Activated CD4-positive, alpha-beta T cell treated with anti-CD3 and anti-CD28 coated beads, Interleukin-2, amount 10 ng/mL, durations not matched to agents 24 days and 14 days (primary cell): ENCODE measurements at regions of chr16 and their contacts with region 1.

Region 1: GRCh38 chr16:11263737-11264136 is 5.4 kb downstream of the TNP2 start:
- DNase-seq: peak; percentile 85
- H3K4me3 Mint-ChIP-seq: peak overlapping the region; percentile 43
- H3K27ac Mint-ChIP-seq: peak overlapping the region; percentile 91
- H3K4me1 Mint-ChIP-seq: peaks cover 40% of the 10 kb centered on the region
- H3K27me3 Mint-ChIP-seq: peaks cover 3% of the 10 kb centered on the region

Region 2: GRCh38 chr16:11297492-11298142 is 33.9 kb after region 1 on chr16:
- intact Hi-C with region 1: loop called (anchors 5 kb)
- DNase-seq: peak; percentile 92
- H3K4me3 Mint-ChIP-seq: peak overlapping the region; percentile 63
- H3K27ac Mint-ChIP-seq: peak overlapping the region; percentile 66
- H3K4me1 Mint-ChIP-seq: peaks cover 35% of the 10 kb centered on the region
- H3K27me3 Mint-ChIP-seq: peaks cover 2% of the 10 kb centered on the region

Region 3: GRCh38 chr16:11310997-11311561 is 47.3 kb after region 1 on chr16:
- intact Hi-C with region 1: loop called (anchors 2 kb)
- DNase-seq: peak; percentile 91
- H3K4me3 Mint-ChIP-seq: peak overlapping the region; percentile 58
- H3K27ac Mint-ChIP-seq: peak overlapping the region; percentile 85
- H3K4me1 Mint-ChIP-seq: peaks cover 57% of the 10 kb centered on the region
- H3K27me3 Mint-ChIP-seq: no peaks in the 10 kb centered on the region

Region 4: DNA sequence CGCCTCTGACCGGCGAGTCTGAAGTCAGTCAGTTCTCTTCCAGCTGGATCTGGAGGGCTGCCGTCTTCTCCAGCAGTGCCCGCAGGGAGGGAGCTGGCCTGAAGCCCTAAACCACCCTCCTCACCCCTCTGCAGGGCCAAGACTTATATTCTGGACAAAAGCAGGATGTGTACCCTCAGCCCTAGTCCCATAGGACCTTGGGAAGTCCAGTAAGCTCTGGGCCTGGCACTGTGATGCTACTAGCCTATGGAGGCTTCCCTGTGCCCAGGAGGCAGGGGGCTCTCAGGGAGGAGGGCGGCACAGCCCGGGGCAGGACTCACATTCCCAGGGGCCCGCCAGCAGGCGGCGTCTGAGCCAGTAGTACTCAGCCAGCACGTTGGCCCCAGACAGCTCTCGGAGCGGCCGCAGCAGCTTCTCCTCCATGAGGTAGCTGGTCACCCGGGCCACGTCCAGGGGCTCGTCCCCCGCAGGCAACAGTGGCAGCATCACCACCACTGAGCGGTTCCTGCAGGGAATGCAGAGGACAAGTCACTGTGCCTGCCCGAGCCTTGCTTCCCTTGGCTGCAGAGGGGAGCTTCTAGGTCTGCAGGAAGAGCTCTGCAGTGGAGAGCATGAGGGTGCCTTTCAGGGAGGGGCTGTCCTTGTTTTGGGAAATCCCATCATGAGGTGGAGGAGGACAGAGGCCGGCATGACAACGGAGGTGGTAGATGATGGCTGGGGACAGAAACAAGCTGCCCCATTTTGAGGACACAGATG is 123.2 kb after region 1 on chr16:
- intact Hi-C with region 1: no loop called
- DNase-seq: no peak
- H3K4me3 Mint-ChIP-seq: no peak overlapping the region
- H3K27ac Mint-ChIP-seq: no peak overlapping the region
- H3K4me1 Mint-ChIP-seq: peaks cover 11% of the 10 kb centered on the region
- H3K27me3 Mint-ChIP-seq: no peaks in the 10 kb centered on the region

Region 5: GRCh38 chr16:11669380-11670146 is 405.8 kb after region 1 on chr16:
- intact Hi-C with region 1: no loop called
- DNase-seq: peak; percentile 62
- H3K4me3 Mint-ChIP-seq: peak overlapping the region; percentile 80
- H3K27ac Mint-ChIP-seq: peak overlapping the region; percentile 80
- H3K4me1 Mint-ChIP-seq: peaks cover 58% of the 10 kb centered on the region
- H3K27me3 Mint-ChIP-seq: no peaks in the 10 kb centered on the region